PC-9 (cell line): ENCODE measurements at regions of chr17 and their contacts with region 1.

Region 1: GRCh38 chr17:64661976-64662773 is at the start of gene SMURF2:
- DNase-seq: peak in 1 of 2 experiments; percentile 77
- H3K4me3 ChIP-seq: peak within 1 kb of the TSS; percentile 96
- H3K27ac ChIP-seq: peak within 1 kb of the TSS; percentile 62
- H3K4me1 ChIP-seq: peaks cover 53% of the 10 kb centered on the region
- H3K27me3 ChIP-seq: no peaks in the 10 kb centered on the region
- CTCF ChIP-seq: 0 out of 2 replicates have a peak, but pooled peaks have one; percentile 16
- total RNA-seq, gene SMURF2: 41.4 and 57.6 TPM in 2 replicates

Region 2: GRCh38 chr17:64534175-64534574 is 128.0 kb before region 1 on chr17:
- CTCF ChIA-PET with region 1: no interaction called
- POLR2A ChIA-PET with region 1: no interaction called
- intact Hi-C with region 1: no loop called
- DNase-seq: peak in 1 of 2 experiments; percentile 20
- H3K4me3 ChIP-seq: no peak overlapping the region
- H3K27ac ChIP-seq: no peak overlapping the region
- H3K4me1 ChIP-seq: no peaks in the 10 kb centered on the region
- H3K27me3 ChIP-seq: no peaks in the 10 kb centered on the region
- CTCF ChIP-seq: peak; percentile 40; the same call in 1 of the 2 replicates

Region 3: GRCh38 chr17:64648234-64648633 is 13.9 kb before region 1 on chr17:
- CTCF ChIA-PET with region 1: no interaction called
- POLR2A ChIA-PET with region 1: no interaction called
- intact Hi-C with region 1: no loop called
- DNase-seq: no peak
- H3K4me3 ChIP-seq: no peak overlapping the region
- H3K27ac ChIP-seq: 0 out of 2 replicates have a peak overlapping the region, but pooled peaks have one; percentile 12
- H3K4me1 ChIP-seq: peaks cover 28% of the 10 kb centered on the region
- H3K27me3 ChIP-seq: no peaks in the 10 kb centered on the region
- CTCF ChIP-seq: no peak

Region 4: GRCh38 chr17:64707019-64707591 is 44.9 kb after region 1 on chr17:
- CTCF ChIA-PET with region 1: interaction called, 3 read pairs
- POLR2A ChIA-PET with region 1: no interaction called
- intact Hi-C with region 1: loop called (anchors 2 kb)
- DNase-seq: peak; percentile 91 to 99
- H3K4me3 ChIP-seq: peak overlapping the region; percentile 13; the same call in 1 of the 2 replicates
- H3K27ac ChIP-seq: peak overlapping the region; percentile 84
- H3K4me1 ChIP-seq: peaks cover 53% of the 10 kb centered on the region
- H3K27me3 ChIP-seq: no peaks in the 10 kb centered on the region
- CTCF ChIP-seq: no peak

Region 5: DNA sequence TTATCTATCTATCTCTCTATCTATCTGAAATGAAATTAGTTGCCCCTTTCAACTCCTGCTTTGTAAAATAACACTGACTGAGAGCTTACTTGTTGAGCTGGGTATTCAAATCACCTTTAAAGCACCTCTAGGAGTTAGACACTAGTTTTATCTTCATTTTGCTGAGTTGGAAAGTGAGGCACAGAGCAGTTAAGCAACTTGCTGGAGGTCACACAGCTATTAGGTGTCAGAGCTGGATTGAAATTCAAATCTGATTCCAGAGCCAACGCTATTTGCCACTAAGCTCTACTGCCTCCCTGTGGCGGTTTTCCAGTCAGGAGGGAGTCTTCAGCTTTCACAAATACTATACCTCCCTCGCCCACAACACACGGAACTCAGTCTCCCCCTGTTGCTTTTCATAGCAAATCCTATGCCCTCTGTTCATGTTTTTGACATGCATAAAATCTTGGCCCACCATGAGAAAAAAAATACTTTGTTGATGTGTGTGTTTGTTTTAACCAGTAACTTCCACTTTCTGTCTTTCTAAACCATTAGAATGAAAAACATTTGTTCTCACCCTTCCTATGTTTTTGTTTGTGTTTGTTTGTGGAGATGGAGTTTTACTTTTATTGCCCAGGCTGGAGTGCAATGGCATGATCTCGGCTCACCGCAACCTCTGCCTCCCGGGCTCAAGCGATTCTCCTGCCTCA is 74.8 kb after region 1 on chr17:
- CTCF ChIA-PET with region 1: no interaction called
- POLR2A ChIA-PET with region 1: no interaction called
- intact Hi-C with region 1: loop called (anchors 2 kb)
- DNase-seq: peak; percentile 44 to 62
- H3K4me3 ChIP-seq: no peak overlapping the region
- H3K27ac ChIP-seq: no peak overlapping the region
- H3K4me1 ChIP-seq: no peaks in the 10 kb centered on the region
- H3K27me3 ChIP-seq: no peaks in the 10 kb centered on the region
- CTCF ChIP-seq: peak; percentile 79

Region 6: DNA sequence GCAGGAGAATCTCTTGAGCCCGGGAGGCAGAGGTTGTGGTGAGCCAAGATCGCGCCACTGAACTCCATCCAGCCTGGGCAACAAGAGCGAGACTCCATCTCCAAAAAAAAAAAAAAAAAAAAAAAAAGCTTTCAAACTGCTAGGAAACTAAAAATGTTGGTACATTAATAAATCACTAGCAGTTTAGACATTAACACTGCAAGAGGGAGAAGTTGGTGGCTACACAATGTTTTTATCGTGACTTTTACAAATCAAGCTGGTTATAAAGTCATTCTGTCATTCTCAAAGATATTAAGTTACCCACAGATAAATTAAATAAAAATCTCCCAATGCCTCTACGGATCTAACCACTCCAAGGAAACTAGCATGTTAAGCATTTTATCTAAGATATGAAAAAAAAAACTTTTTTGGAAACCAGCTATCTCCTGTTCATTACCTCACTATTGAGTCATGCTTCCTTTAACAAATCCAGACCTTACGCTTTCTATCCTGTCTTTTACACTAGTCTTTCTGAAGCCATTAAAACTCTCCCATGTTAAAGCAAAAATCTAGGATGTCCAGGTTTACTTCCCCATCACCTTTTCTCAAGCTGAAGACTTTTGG is 85.9 kb after region 1 on chr17:
- CTCF ChIA-PET with region 1: interaction called, 7 read pairs
- POLR2A ChIA-PET with region 1: interaction called, 11 read pairs
- intact Hi-C with region 1: no loop called
- DNase-seq: no peak
- H3K4me3 ChIP-seq: no peak overlapping the region
- H3K27ac ChIP-seq: no peak overlapping the region
- H3K4me1 ChIP-seq: no peaks in the 10 kb centered on the region
- H3K27me3 ChIP-seq: no peaks in the 10 kb centered on the region
- CTCF ChIP-seq: no peak